ENCODE measurements at regions of chr19 and their contacts with region 1.

Region 1: DNA sequence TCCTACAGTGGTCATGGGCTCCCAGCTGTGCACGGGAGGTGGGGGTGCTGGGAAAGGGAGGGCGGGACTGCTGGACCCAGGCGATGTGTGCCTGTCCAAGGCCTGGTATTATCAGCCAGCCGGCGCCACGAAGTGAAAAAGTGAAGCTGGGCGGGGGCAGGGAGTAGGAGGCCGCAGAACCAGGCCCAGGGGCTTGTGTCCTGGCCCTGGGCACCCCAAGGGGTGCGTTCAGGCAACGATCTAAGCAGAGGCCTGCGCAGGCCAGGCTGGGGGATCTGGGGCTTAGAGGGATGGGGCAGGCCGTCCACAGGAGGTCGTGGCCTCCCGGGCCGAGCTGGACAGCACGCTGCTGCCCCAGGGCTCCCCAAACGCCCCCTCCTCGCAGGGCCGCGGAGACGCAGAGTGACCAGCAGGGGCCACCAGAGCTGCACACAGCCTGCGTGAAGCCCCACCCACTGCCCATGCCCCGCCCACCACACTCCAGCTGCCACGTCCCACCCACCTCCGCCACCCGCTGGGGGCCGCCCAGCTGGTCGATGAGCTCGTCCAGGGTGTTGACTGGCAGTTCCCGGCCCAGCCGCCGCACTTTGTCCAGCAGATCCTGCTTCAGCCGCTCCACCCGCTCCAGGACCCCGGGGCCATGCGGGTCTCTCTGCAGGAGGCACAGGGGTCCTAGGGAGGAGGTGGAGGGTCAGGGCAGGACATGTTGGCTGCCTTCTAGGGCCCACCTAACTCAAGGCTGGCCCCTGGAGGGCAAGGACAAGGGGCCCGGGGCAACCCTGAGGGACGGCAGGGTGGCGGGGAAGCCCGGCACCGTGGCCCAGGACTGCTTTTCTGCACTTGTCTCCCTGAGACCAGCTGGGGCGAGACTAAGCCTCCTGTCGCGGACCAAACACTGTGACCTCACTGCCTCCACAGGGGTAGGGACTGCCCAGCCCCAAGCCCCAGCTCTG is 9.5 kb downstream of the GPX4 start:
- DNase-seq: no peak
- H3K4me3 ChIP-seq: peak overlapping the region in 1 of 2 donors; percentile 31
- H3K27ac ChIP-seq: peak overlapping the region; percentile 84
- H3K4me1 ChIP-seq: peaks cover 24% of the 10 kb centered on the region
- H3K27me3 ChIP-seq: no peaks in the 10 kb centered on the region
- CTCF ChIP-seq: peak; percentile 82 to 99 (median 84)
- POLR2A ChIP-seq: no peak

Region 2: GRCh38 chr19:1189419-1189818 is 76.1 kb after region 1 on chr19:
- intact Hi-C with region 1: loop called (anchors 5 kb)
- DNase-seq: no peak
- H3K4me3 ChIP-seq: no peak overlapping the region
- H3K27ac ChIP-seq: no peak overlapping the region
- H3K4me1 ChIP-seq: peaks cover 5% of the 10 kb centered on the region
- H3K27me3 ChIP-seq: no peaks in the 10 kb centered on the region
- CTCF ChIP-seq: no peak
- POLR2A ChIP-seq: no peak

Region 3: DNA sequence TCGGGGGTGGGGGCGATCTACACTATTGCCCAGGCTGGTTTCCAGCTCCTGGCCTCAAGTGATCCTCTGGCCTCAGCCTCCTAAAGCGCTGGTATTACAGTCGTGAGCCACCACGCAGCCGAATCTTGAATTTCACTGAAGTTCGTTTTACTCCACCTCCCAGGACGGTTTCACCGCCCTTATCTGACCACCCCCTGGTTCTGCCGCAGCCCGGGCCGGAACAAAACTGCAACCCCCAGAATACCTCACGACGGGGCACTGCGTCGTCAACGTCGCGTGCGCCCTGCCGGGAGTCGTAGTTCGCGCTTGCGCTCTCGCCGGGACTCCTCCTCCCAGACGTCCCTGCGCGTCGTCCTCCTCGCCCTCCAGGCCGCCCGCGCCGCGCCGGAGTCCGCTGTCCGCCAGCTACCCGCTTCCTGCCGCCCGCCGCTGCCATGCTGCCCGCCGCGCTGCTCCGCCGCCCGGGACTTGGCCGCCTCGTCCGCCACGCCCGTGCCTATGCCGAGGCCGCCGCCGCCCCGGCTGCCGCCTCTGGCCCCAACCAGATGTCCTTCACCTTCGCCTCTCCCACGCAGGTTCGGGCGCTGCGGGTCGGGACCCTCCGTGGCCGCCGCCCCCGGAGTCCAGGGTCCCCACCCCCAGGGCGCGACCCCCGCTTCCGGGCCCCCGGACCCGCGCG is 128.2 kb after region 1 on chr19 and contains the start of gene ATP5F1D:
- intact Hi-C with region 1: loop called (anchors 5 kb)
- DNase-seq: no peak
- H3K4me3 ChIP-seq: peak within 1 kb of the TSS; percentile 70 to 90
- H3K27ac ChIP-seq: peak within 1 kb of the TSS; percentile 97
- H3K4me1 ChIP-seq: peaks cover 75% of the 10 kb centered on the region
- H3K27me3 ChIP-seq: no peaks in the 10 kb centered on the region
- CTCF ChIP-seq: no peak
- POLR2A ChIP-seq: peak in 1 of 2 donors; percentile 81
- total RNA-seq, gene ATP5F1D: 154 TPM

Region 4: DNA sequence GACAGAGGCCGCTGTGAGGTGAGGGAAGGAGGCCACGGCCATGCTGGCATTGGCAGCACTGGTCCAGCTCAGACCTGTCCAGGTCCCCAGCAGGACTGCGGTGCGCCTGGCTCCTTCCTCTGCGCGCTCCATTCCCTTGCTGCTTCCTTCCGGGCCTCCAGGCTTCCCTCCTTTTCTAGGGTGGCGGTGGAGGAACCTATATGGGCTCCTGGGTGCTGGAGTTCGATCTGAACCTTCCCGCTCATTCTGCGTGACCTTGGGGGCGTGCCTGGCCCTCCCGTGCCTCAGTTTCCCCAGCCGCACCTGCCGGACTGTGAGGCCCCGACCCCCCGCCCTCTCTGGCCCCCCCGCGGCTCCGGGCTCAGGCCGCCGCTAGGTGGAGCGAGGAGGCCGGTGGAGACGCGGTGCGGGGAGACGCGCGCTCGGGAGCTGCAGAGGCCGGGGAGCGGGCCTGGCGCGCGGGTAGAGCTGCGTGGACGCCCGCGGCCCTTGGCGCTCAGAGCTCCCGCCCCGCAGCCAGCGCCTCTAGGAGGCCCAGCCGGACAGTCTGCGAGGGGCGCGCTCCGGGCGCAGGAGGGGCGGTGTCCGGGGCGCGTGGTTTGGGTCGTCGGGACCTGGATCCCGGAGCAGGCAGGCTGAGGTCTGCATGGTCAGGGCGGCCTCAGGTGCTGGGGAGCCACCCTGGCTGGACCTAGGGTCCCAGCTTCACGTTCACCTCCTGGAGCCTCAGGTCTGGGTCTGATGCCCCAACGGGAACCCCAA is 202.3 kb after region 1 on chr19:
- intact Hi-C with region 1: no loop called
- DNase-seq: no peak
- H3K4me3 ChIP-seq: peak overlapping the region; percentile 13 to 37
- H3K27ac ChIP-seq: no peak overlapping the region
- H3K4me1 ChIP-seq: peaks cover 11% of the 10 kb centered on the region
- H3K27me3 ChIP-seq: no peaks in the 10 kb centered on the region
- CTCF ChIP-seq: peak; percentile 13 to 54 (median 32)
- POLR2A ChIP-seq: no peak